PC-3 (cell line): ENCODE measurements at regions of chr2 and their contacts with region 1.

Region 1: DNA sequence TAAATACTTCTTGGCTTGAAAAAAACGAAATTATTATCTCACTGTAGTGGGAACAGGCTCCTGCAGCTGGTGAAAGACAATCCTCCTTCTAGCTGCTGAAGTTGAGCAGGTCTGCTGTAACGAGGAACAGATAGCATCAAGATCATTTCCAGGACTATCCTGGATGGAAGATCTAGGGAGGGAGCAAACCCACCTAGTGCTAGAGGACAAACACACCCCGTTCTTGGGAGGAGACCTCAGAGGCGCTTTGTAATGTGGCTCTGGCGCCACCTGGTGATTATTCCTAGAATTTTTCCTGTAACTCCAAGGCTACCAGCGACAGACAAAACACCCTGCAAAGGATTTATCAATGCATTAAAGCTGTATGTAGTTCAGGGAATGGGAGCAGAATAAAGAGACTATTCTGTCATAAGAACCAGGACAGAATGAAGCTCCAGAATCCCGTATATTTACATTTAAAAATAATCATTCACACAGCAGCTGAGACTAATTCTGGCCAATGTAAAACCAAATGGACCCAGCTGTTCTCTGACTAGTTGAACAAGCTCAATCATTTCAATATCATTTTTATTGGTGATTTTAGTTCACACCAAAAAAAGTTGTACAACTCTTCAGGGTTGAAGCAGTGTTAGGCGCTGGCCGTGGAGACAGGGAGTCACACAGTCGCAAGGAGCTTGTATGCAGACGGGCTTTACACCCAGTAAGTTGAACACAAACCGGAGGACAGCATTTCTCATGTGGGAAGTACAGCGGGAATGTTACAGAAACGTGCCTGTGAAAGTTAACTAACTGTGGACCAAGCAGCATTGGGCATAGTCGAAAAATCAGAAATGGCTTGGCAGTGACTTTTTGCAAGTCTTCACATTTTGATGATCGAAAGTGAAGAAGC is 290.3 kb downstream of the TRIB2 start:
- DNase-seq: peak; percentile 87
- ATAC-seq: peak; percentile 95
- H3K4me3 ChIP-seq: peak overlapping the region; percentile 62
- H3K27ac ChIP-seq: no peak overlapping the region
- H3K4me1 ChIP-seq: peaks cover 7% of the 10 kb centered on the region
- H3K27me3 ChIP-seq: no peaks in the 10 kb centered on the region
- CTCF ChIP-seq: peak; percentile 89

Region 2: GRCh38 chr2:11835403-11835802 is 1171.7 kb before region 1 on chr2:
- CTCF ChIA-PET with region 1: no interaction called
- POLR2A ChIA-PET with region 1: no interaction called
- intact Hi-C with region 1: loop called (anchors 1 kb)
- DNase-seq: peak; percentile 33
- ATAC-seq: peak; percentile 64; the same call in 1 of the 2 replicates
- H3K4me3 ChIP-seq: no peak overlapping the region
- H3K27ac ChIP-seq: no peak overlapping the region
- H3K4me1 ChIP-seq: peaks cover 12% of the 10 kb centered on the region
- H3K27me3 ChIP-seq: no peaks in the 10 kb centered on the region
- CTCF ChIP-seq: peak; percentile 51

Region 3: DNA sequence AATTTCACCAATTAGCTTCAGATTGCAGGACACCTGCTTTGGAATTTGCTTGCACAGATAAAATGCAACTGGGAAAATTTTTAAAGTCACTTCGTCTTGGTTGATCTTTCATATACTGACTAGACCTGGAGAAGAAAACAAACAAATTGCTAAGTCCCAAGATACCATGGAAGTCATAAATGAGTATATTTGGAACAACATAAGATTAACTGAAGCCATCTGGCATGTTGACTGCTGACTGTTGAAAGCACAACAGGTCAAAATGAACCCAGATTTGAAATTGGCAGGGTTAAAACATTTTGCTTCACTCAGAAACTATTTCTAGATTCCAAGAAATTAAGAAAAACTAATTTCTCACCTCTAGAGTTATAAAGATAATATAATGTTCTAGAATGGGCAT is 789.9 kb before region 1 on chr2:
- CTCF ChIA-PET with region 1: no interaction called
- POLR2A ChIA-PET with region 1: no interaction called
- intact Hi-C with region 1: loop called (anchors 5 kb)
- DNase-seq: no peak
- ATAC-seq: no peak
- H3K4me3 ChIP-seq: no peak overlapping the region
- H3K27ac ChIP-seq: no peak overlapping the region
- H3K4me1 ChIP-seq: peaks cover 10% of the 10 kb centered on the region
- H3K27me3 ChIP-seq: no peaks in the 10 kb centered on the region
- CTCF ChIP-seq: no peak

Region 4: DNA sequence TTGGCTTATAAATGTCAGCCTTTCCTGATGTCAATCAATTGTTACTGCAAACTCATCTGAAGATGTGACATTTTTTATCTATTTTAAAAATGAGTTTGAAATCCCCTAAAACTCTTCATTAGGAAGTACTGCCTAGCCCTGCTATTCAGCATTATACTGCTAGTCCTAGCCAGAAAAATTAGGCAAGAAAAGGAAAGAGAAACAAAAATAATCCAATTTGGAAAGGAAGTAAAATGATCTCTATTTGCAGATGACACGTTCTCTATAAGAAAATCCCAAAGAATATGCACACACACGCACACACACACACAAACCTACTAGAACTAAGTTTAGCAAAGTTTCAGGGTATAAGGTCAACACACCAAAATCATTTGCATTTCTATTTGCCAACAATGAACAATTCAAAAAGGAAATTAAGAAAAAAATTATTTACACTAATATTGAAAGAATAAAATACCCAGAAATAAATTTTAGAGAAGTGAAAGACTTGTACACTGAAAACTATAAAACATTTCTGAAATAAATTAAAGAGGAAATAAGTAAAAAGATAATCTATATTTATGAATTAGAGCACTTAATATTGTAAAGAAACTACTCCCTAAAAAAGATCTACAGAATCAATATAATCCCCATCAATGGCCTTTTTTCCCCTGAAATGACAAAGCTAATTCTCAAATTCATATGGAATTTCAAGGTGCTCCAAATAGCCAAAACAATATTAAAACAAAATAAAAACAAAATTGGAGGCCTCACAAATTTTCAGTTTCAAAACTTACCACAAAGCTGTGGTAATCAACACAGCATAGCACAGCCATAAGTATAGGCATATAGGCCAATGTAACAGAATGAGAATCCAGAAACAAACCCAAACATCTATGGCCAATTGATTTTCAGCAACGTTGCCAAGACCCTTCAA is 724.0 kb before region 1 on chr2:
- CTCF ChIA-PET with region 1: no interaction called
- POLR2A ChIA-PET with region 1: no interaction called
- intact Hi-C with region 1: loop called (anchors 10 kb)
- DNase-seq: no peak
- ATAC-seq: no peak
- H3K4me3 ChIP-seq: no peak overlapping the region
- H3K27ac ChIP-seq: no peak overlapping the region
- H3K4me1 ChIP-seq: peaks cover 36% of the 10 kb centered on the region
- H3K27me3 ChIP-seq: no peaks in the 10 kb centered on the region
- CTCF ChIP-seq: no peak

Region 5: GRCh38 chr2:12824351-12824777 is 182.7 kb before region 1 on chr2:
- CTCF ChIA-PET with region 1: interaction called, 3 read pairs
- POLR2A ChIA-PET with region 1: no interaction called
- intact Hi-C with region 1: loop called (anchors 5 kb)
- DNase-seq: no peak
- ATAC-seq: no peak
- H3K4me3 ChIP-seq: no peak overlapping the region
- H3K27ac ChIP-seq: no peak overlapping the region
- H3K4me1 ChIP-seq: peaks cover 9% of the 10 kb centered on the region
- H3K27me3 ChIP-seq: no peaks in the 10 kb centered on the region
- CTCF ChIP-seq: no peak